Activated CD4-positive, alpha-beta memory T cell treated with anti-CD3 and anti-CD28 coated beads for 36 hours (primary cell): ENCODE measurements at regions of chr7 and their contacts with region 1.

Region 1: DNA sequence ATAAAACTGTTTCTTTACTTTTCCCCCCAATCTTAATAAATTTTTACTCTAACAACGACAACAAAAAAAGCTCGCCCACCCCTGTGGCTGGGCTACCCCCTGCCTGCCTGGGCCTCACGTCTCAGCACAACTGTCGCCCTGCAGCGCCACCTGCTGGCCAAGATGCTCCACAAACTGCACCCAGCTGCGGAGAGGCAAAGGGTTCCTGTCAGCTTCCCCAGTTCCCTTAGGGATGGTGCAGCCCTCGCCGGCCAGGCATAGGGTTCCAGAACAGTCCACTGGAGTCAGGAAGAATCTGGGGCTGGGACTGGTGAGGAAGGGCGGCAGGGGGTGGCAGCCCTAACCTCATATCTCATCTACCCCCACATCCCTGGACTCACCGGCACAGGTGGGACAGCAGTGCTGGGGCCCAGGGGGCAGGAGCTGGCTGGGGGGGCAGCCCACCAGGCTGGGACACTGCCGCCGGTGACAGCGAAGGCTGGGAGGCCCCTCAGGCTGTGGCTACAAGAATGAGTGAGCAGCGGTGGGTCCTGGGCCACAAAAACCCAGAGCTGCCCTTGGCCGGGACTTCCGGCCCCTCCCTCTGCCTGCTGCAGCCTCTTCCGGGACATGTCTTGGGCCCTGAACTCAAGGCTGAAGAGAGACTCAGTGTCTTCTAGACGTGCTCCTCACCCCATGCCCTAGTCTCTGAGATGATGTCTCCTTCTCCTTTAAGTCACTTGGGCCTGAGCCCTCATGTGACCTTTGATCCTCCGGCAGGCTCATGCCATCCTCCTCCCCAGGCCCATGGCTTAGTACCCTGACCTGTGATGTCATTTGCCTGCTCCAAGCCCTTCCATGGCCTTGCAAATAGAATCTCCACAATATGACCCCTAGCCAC is 21.2 kb downstream of the ATP6V1F start:
- DNase-seq: peak; percentile 88
- H3K4me3 Mint-ChIP-seq: peak overlapping the region; percentile 0
- H3K27ac Mint-ChIP-seq: no peak overlapping the region
- H3K4me1 Mint-ChIP-seq: peaks cover 1% of the 10 kb centered on the region
- H3K27me3 Mint-ChIP-seq: peaks cover 2% of the 10 kb centered on the region

Region 2: GRCh38 chr7:128791121-128791961 is 92.5 kb before region 1 on chr7:
- CTCF ChIA-PET with region 1: interaction called, 5 read pairs
- POLR2A ChIA-PET with region 1: no interaction called
- intact Hi-C with region 1: loop called (anchors 2 kb)
- DNase-seq: peak; percentile 83
- H3K4me3 Mint-ChIP-seq: peak overlapping the region; percentile 77
- H3K27ac Mint-ChIP-seq: no peak overlapping the region
- H3K4me1 Mint-ChIP-seq: no peaks in the 10 kb centered on the region
- H3K27me3 Mint-ChIP-seq: no peaks in the 10 kb centered on the region

Region 3: GRCh38 chr7:128841921-128842651 is 41.8 kb before region 1 on chr7:
- CTCF ChIA-PET with region 1: interaction called, 27 read pairs
- POLR2A ChIA-PET with region 1: no interaction called
- intact Hi-C with region 1: loop called (anchors 1 kb)
- DNase-seq: peak; percentile 75
- H3K4me3 Mint-ChIP-seq: no peak overlapping the region
- H3K27ac Mint-ChIP-seq: no peak overlapping the region
- H3K4me1 Mint-ChIP-seq: peaks cover 5% of the 10 kb centered on the region
- H3K27me3 Mint-ChIP-seq: no peaks in the 10 kb centered on the region

Region 4: GRCh38 chr7:128872394-128872824 is 11.5 kb before region 1 on chr7:
- CTCF ChIA-PET with region 1: interaction called, 10 read pairs
- POLR2A ChIA-PET with region 1: no interaction called
- intact Hi-C with region 1: no loop called
- DNase-seq: no peak
- H3K4me3 Mint-ChIP-seq: no peak overlapping the region
- H3K27ac Mint-ChIP-seq: no peak overlapping the region
- H3K4me1 Mint-ChIP-seq: peaks cover 10% of the 10 kb centered on the region
- H3K27me3 Mint-ChIP-seq: peaks cover 3% of the 10 kb centered on the region

Region 5: GRCh38 chr7:128909625-128910257 is 25.9 kb after region 1 on chr7:
- CTCF ChIA-PET with region 1: no interaction called
- POLR2A ChIA-PET with region 1: no interaction called
- intact Hi-C with region 1: no loop called
- DNase-seq: no peak
- H3K4me3 Mint-ChIP-seq: no peak overlapping the region
- H3K27ac Mint-ChIP-seq: no peak overlapping the region
- H3K4me1 Mint-ChIP-seq: peaks cover 4% of the 10 kb centered on the region
- H3K27me3 Mint-ChIP-seq: peaks cover 45% of the 10 kb centered on the region

Region 6: DNA sequence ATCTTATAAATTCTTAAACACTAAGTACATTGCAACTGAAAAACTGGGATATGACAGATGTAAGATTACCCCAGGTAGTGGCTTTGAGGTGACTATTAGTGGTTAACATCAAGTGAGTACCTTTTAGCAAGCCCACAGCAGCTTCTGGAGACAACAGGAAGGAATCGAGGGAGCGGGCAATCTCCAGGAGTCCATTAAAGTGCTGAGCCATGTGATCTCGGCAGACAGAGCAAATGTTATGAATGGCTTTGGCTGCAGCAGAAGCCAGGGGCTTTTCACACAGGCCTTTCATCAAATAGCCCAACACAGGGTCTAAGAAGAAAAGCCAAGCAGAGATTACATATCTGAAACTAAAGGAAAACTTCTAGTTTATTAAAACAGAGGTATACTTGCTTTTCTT is 102.7 kb after region 1 on chr7:
- CTCF ChIA-PET with region 1: no interaction called
- POLR2A ChIA-PET with region 1: no interaction called
- intact Hi-C with region 1: no loop called
- DNase-seq: no peak
- H3K4me3 Mint-ChIP-seq: no peak overlapping the region
- H3K27ac Mint-ChIP-seq: no peak overlapping the region
- H3K4me1 Mint-ChIP-seq: no peaks in the 10 kb centered on the region
- H3K27me3 Mint-ChIP-seq: no peaks in the 10 kb centered on the region

Region 7: DNA sequence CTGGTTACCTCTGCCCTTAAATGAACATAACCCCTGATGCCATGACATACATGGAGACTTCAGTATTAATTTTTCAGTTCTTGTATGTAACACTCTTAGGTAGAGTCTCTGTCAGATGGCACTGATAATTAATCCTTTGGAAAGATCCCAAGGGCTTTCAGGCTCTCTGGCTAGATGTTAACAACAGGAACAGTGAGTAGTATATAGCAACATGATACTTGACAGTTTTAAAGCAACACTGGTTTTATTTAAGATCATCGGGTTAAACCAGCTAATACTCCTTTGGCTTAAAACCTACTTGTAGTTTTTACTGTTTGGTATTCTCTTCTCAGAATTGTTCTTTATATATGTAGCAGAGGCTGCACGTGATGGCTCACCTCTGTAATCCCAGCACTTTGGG is 368.3 kb after region 1 on chr7:
- CTCF ChIA-PET with region 1: no interaction called
- POLR2A ChIA-PET with region 1: no interaction called
- intact Hi-C with region 1: no loop called
- DNase-seq: no peak
- H3K4me3 Mint-ChIP-seq: no peak overlapping the region
- H3K27ac Mint-ChIP-seq: no peak overlapping the region
- H3K4me1 Mint-ChIP-seq: peaks cover 1% of the 10 kb centered on the region
- H3K27me3 Mint-ChIP-seq: no peaks in the 10 kb centered on the region